ENCODE measurements at regions of chr1 and their contacts with region 1.

Region 1: DNA sequence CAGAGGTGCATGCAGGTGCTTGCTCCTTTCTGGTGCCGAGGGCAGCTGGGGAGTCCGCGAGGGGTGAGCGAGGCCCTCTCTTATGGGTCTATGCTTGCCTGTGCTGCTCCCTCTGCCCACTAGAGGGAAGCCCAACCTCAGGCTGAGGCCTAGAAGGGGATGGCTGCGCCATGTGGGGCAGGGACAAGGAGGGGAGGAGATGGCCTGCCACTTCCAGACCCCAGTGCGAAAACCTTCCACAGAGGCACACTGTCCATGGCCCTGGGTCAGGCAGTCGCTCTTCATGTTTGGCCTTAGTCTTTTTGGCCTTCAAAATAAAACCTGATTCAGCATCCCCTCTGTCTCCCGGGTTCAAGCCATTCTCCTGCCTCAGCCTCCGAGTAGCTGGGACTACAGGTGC is 14.0 kb downstream of the RHBG start:
- DNase-seq: peak; percentile 72
- ATAC-seq: peak; percentile 82
- H3K4me3 Mint-ChIP-seq: no peak overlapping the region
- H3K27ac Mint-ChIP-seq: no peak overlapping the region
- H3K4me1 Mint-ChIP-seq: peaks cover 10% of the 10 kb centered on the region
- H3K27me3 Mint-ChIP-seq: peaks cover 15% of the 10 kb centered on the region

Region 2: DNA sequence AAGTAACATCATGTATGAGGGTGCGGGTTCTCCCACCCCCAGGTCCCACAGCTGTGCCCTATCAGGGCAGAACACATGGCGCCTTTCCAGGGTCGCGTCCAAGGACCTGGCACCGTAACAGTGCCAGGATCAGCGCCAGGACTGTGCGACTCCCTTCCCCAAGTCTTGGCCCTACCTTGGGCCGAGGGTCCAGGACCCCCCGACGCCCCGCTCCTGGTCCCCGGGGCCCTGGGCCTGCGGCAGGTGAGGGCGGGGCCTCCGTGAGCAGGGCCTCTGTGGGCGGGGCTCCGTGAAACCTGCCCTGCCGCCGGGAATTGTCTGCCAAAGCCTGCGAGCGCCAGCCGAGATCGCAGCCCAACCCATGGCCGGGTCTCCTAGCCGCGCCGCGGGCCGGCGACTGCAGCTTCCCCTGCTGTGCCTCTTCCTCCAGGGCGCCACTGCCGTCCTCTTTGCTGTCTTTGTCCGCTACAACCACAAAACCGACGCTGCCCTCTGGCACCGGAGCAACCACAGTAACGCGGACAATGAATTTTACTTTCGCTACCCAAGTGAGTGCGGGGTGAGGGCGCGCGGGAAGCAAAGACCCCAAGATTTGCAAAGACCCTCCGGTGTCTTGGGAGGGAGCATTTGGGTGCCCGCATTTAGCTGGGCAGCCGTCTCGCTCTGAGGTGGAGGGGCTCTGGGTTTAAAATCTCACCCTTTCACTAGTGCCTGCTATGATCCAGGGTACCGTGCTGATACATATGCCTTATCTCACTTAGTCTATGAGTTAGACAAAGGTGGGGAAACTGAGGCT is 13.9 kb before region 1 on chr1 and contains the start of gene RHBG:
- CTCF ChIA-PET with region 1: interaction called, 47 read pairs
- POLR2A ChIA-PET with region 1: interaction called, 3 read pairs
- DNase-seq: no peak
- ATAC-seq: peak; percentile 56
- H3K4me3 Mint-ChIP-seq: peak within 1 kb of the TSS; percentile 34
- H3K27ac Mint-ChIP-seq: no peak within 1 kb of the TSS
- H3K4me1 Mint-ChIP-seq: peaks cover 4% of the 10 kb centered on the region
- H3K27me3 Mint-ChIP-seq: peaks cover 58% of the 10 kb centered on the region
- total RNA-seq, gene RHBG: not detected

Region 3: GRCh38 chr1:156421062-156421938 is 38.3 kb after region 1 on chr1:
- CTCF ChIA-PET with region 1: interaction called, 44 read pairs
- POLR2A ChIA-PET with region 1: no interaction called
- DNase-seq: peak; percentile 78
- ATAC-seq: peak; percentile 73
- H3K4me3 Mint-ChIP-seq: peak overlapping the region; percentile 81
- H3K27ac Mint-ChIP-seq: no peak overlapping the region
- H3K4me1 Mint-ChIP-seq: peaks cover 22% of the 10 kb centered on the region
- H3K27me3 Mint-ChIP-seq: peaks cover 88% of the 10 kb centered on the region

Region 4: DNA sequence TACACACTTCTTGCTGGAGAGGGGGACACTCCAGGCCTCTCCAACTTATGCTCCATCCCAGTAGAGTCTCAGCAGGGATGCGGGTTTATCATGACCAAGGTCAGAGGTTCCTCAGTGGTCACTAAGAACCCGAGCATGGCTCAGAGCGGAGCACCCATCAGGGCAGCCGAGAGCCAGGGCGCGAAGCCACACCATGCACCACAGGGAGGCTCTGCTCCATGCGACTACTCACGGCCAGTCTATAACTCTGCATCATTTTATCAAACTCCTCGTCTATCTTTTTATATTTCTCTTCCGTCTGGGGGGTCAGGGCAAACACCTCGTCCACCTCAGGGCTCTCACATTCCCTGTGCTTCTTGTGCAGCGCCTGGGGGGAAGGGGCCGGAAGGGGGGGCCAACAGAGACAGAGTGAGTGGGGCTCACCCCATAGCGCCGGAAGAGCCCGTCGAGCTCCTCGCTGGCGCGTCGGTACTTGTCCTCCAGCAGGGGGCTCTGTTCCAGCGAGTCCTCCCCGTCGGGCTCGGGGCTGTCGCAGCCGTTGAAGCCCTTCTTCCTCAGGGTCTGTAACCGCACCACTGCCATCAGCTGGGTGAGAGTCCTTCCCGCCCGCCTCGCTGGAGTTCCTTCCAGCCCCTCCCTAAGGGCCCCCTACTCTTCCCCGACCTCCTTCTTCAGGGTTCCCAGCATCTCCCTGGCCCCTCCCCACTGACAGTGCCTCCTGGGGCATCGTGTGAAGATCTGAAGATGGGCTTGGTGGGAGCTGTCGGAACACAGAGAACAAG is 97.6 kb after region 1 on chr1:
- CTCF ChIA-PET with region 1: interaction called, 18 read pairs
- POLR2A ChIA-PET with region 1: no interaction called
- DNase-seq: peak; percentile 87
- ATAC-seq: peak; percentile 90
- H3K4me3 Mint-ChIP-seq: no peak overlapping the region
- H3K27ac Mint-ChIP-seq: peak overlapping the region; percentile 71
- H3K4me1 Mint-ChIP-seq: peaks cover 59% of the 10 kb centered on the region
- H3K27me3 Mint-ChIP-seq: no peaks in the 10 kb centered on the region

Region 5: DNA sequence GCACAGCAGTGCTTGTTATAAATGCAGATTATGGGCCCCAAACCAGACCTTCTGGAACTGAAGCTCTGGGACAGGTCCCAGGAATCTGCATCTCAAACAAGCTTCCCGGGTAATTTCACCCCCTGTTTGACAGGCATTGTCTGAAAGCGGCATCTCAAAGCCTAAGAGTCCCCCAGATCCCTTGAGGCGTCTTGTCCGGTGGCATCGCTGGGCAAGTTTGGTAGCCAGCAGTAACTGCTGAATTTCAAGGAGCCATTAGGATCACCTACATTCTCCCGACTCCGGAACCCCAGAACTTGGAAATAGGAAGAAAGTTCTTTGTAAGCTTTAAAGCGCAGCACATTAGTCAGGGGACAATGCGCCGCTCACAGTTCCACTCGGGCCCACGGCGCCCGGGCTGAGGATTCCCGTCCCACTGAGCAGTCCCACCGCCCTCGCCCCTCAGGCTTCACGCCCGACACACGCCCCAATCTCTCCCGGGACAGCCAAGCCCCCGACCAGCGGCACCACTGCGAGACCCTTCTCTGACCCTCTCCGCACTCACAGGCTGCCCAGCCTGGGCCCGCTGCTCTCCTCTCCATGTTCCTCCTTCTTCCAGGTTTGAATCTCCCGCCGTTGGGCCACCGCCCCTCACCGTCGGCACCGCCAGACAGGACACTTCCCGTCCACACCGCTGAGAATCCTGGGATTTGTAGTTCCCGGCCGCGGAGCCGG is 189.1 kb after region 1 on chr1 and contains the start of gene IQGAP3:
- CTCF ChIA-PET with region 1: interaction called, 13 read pairs
- POLR2A ChIA-PET with region 1: no interaction called
- DNase-seq: peak; percentile 86
- ATAC-seq: peak; percentile 96
- H3K4me3 Mint-ChIP-seq: peak within 1 kb of the TSS; percentile 97
- H3K27ac Mint-ChIP-seq: peak within 1 kb of the TSS; percentile 80
- H3K4me1 Mint-ChIP-seq: peaks cover 23% of the 10 kb centered on the region
- H3K27me3 Mint-ChIP-seq: peaks cover 11% of the 10 kb centered on the region
- total RNA-seq, gene IQGAP3: 28.6 to 31.0 TPM

Region 6: GRCh38 chr1:156608036-156608674 is 225.1 kb after region 1 on chr1:
- CTCF ChIA-PET with region 1: interaction called, 57 read pairs
- POLR2A ChIA-PET with region 1: interaction called, 4 read pairs
- DNase-seq: peak; percentile 83
- ATAC-seq: peak; percentile 96
- H3K4me3 Mint-ChIP-seq: no peak overlapping the region
- H3K27ac Mint-ChIP-seq: no peak overlapping the region
- H3K4me1 Mint-ChIP-seq: peaks cover 15% of the 10 kb centered on the region
- H3K27me3 Mint-ChIP-seq: peaks cover 16% of the 10 kb centered on the region

Measured in activated CD8-positive, alpha-beta T cell treated with anti-CD3 and anti-CD28 coated beads, Interleukin-2, amount 10 ng/mL, durations not matched to agents 7 days and 5 days (primary cell).